Left cardiac atrium (tissue), 4 donors: ENCODE measurements at regions of chr5 and their contacts with region 1.

Region 1: GRCh38 chr5:75734913-75735789 is 17.9 kb upstream of the POC5 start:
- DNase-seq: no peak
- ATAC-seq: no peak

Region 2: GRCh38 chr5:76256116-76256889 is 521.2 kb after region 1 on chr5:
- intact Hi-C with region 1: loop called in 1 of 2 experiments (anchors 10 kb)
- DNase-seq: peak; percentile 39
- ATAC-seq: peak; percentile 90 to 92